ENCODE measurements at regions of chr17 and their contacts with region 1.

Region 1: GRCh38 chr17:75845049-75845860 is 1.1 kb upstream of the UNC13D start:
- DNase-seq: peak; percentile 77
- H3K4me3 Mint-ChIP-seq: peak overlapping the region; percentile 16
- H3K27ac Mint-ChIP-seq: no peak overlapping the region
- H3K4me1 Mint-ChIP-seq: peaks cover 14% of the 10 kb centered on the region
- H3K27me3 Mint-ChIP-seq: no peaks in the 10 kb centered on the region
- CTCF ChIP-seq: peak; percentile 81

Region 2: DNA sequence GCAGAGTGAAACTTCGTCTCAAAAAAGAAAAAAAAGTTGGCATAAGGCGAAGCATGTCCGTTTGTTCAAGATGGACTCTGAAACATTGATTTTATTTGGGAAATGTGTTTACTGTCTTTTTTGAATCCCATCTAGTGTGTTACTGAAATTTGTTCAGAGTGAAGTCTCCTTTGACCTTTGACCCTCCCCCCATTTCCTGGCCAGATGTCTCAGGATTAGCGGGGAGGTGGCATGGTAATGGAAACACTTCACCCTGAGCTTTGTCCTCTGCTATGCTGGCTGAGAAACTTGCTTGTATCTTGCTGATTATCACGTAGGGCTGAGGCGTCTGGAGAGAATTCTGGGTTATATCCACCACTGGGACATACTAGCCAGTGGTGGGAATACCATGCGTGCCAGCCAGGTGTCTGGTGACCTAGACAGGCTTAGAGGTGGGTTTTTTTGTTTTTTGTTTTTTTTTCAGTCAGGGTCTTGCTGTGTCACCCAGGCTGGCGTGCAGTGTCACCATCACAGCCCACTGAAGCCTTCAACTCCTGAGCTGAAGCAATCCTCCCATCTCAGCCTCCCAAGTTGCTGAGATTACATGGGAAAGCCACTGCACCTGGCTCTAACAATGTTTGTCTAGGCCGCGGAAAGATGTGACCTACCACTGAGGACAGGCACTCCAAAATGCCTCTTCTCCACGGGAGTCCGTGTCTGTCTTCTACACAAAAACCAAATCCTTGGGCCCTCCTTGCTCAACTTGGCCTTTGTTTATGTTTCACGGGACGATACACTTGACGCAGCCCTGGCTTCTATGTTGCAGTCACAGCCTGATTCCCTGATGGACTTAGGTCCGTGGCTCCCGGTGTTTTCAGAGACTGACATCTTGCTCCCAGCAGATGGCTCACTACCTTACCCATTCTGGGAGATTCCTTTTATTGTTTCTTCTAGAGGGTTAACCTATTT is 73.6 kb before region 1 on chr17:
- CTCF ChIA-PET with region 1: no interaction called
- POLR2A ChIA-PET with region 1: interaction called, 7 read pairs
- intact Hi-C with region 1: loop called (anchors 2 kb)
- DNase-seq: no peak
- H3K4me3 Mint-ChIP-seq: no peak overlapping the region
- H3K27ac Mint-ChIP-seq: no peak overlapping the region
- H3K4me1 Mint-ChIP-seq: peaks cover 8% of the 10 kb centered on the region
- H3K27me3 Mint-ChIP-seq: no peaks in the 10 kb centered on the region
- CTCF ChIP-seq: no peak